OCI-LY7 (cell line): ENCODE measurements at regions of chr14 and their contacts with region 1.

Region 1: GRCh38 chr14:105369653-105370040 is 28.7 kb upstream of the TEX22 start:
- DNase-seq: no peak
- H3K4me3 ChIP-seq: no peak overlapping the region
- H3K27ac ChIP-seq: no peak overlapping the region
- H3K4me1 ChIP-seq: no peaks in the 10 kb centered on the region
- CTCF ChIP-seq: no peak

Region 2: DNA sequence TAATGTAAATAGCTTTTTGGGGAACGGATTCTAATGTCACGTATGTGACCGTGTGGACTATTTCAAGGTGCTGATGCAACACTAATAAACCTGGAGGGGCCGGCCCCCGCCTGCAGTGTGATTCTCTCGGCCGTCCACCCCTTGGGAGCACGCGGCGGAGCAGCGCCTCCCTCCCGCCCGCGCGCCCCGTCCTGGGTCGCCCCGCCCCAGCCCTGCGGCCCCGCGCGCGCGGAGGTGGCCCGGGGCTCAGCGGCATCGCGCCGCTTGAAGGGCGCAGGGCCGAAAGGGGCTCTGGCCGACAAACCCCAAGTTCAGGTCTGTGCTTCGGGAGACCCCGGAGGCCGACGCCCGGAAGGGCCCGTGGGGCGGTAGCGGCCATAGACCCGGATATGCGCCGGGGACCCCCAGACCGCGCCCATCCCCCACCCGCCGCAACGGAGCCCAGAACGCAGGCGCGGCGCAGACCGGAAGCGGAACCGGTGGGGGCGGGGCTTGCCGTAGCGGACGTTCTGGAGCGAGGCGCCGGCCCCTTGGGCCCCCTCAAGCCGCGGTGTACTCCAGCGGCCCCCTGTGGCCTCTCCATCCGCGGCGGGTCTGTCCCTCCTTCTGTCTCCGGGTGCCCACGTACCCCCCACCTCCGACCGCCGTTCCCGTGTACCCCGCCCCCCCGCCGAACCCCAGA is 28.5 kb after region 1 on chr14 and contains the start of gene TEX22:
- CTCF ChIA-PET with region 1: no interaction called
- POLR2A ChIA-PET with region 1: no interaction called
- intact Hi-C with region 1: loop called (anchors 2 kb)
- DNase-seq: peak; percentile 93
- H3K4me3 ChIP-seq: peak within 1 kb of the TSS; percentile 86
- H3K27ac ChIP-seq: peak within 1 kb of the TSS; percentile 61
- H3K4me1 ChIP-seq: peaks cover 23% of the 10 kb centered on the region
- CTCF ChIP-seq: peak; percentile 61
- total RNA-seq, gene TEX22: 1.3 and 2.3 TPM in 2 replicates

Region 3: GRCh38 chr14:105480952-105481801 is 111.5 kb after region 1 on chr14:
- CTCF ChIA-PET with region 1: no interaction called
- POLR2A ChIA-PET with region 1: no interaction called
- intact Hi-C with region 1: loop called (anchors 2 kb)
- DNase-seq: peak; percentile 83
- H3K4me3 ChIP-seq: peak overlapping the region; percentile 19
- H3K27ac ChIP-seq: no peak overlapping the region
- H3K4me1 ChIP-seq: peaks cover 15% of the 10 kb centered on the region
- CTCF ChIP-seq: peak; percentile 97

Region 4: DNA sequence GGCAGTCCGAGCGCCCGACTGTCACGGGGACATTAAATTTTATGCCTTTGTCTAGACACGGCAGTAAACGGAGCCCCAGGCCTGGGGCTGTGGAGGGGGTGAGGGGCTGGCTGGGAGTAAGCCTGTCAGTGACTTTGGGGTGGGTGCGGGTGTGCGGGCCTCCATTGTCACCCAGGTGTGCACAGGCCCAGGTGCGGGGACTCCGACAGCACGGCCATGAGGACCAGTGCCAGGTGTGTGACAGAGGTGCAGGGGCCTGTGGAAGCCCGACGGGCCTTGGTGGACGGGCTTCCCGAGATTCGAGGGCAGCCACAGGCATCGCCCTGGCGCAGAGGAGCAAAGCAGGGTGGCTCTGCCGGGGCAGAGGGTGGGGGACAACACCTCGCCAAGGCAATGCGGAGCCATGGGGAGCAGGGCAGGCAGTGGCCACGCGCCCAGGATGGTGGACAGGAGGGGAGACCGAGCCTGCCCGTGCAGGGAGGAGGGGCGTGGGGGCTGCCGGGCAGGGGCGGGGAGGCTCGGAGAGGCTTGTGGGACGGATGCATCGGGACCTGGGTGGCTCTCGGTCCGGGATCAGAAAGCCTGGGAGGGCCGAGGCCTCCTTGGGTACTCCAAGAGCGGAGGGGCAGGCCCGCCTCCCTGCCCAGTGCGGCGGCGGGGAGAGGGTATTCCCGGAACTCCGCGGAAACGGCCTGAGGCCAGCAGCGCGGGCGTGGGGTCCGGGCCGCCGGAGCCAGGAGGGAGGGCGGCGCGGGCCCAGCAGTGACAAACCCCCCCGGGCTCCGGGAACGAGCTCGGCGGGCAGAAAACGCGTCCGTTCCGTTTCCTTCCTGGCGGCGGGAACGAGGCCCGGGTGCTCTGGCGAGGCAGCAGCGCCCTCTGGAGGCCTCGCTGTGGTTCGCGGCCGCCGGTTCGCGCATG is 158.3 kb after region 1 on chr14:
- CTCF ChIA-PET with region 1: no interaction called
- POLR2A ChIA-PET with region 1: no interaction called
- intact Hi-C with region 1: loop called (anchors 2 kb)
- DNase-seq: peak; percentile 84
- H3K4me3 ChIP-seq: peak overlapping the region; percentile 64
- H3K27ac ChIP-seq: no peak overlapping the region
- H3K4me1 ChIP-seq: peaks cover 46% of the 10 kb centered on the region
- CTCF ChIP-seq: peak; percentile 76